ENCODE measurements at regions of chr22 and their contacts with region 1.

Region 1: DNA sequence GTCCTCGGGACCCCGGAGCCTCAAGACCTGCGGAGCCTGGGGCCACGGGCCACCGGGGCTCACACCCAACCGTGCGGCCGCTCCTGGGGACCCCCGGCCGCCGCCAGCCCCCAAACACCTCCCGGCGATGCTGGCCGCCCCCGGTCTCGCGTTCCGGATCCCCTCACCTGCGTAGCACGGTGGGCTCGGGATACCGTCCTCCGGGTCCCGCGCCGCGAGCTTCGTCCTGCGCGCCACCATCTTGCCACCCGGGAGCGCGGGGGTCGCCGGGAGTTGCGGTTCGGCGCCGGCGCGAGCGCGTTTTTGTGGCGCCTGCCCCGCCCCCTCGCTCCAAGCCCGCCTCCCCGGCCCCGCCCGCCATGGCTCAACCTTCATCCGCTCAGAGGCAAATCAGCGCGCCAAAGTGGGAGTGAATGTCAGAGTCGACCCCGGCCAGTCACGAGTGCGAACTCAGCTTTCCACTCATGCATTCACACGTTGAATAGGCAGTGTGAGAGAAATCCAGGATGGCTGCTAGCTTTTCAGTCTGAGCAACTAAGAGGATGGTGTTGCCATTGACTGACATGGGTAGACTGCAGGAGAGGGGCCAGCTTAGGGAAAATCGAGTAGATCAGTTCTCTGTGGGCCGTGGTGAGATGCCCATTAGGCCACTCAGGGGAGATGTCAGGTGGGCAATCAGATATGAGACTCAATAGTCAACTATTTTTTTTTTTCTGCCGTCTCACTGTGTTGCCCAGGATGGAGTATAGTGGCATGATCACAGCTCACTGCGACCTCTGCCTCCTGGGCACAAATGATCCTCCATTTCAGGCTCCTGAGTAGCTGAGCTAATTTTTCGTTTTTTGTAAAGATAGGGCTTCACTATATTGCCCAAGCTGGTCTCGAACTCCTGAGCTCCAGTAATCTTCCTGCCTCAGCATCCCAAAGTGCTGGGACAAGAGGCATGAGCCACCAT is 28.3 kb downstream of the SERHL2 start:
- DNase-seq: peak; percentile 91
- ATAC-seq: peak; percentile 92
- H3K4me3 Mint-ChIP-seq: peak overlapping the region; percentile 95
- H3K27ac Mint-ChIP-seq: peak overlapping the region; percentile 95
- H3K4me1 Mint-ChIP-seq: peaks cover 9% of the 10 kb centered on the region
- H3K27me3 Mint-ChIP-seq: no peaks in the 10 kb centered on the region
- CTCF ChIP-seq: no peak

Region 2: DNA sequence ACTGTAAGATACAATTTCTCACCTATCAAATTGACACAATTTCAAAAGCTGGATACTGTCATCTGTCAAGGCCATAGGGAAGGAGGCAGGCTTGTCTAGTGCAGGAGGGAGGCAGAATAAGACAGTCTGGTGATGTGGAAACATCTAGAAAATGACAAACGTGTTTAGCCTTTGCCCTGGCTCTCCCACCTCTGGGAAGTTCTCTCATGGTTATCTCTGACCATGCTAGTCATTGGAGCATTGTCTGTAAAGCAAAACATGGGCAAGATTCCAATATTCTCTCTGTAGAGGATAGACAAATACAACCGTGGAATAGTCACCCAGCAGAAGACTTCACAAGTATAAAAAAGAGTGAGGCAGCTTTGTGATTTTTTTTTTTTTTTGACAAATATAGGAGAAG is 37.4 kb before region 1 on chr22:
- CTCF ChIA-PET with region 1: no interaction called
- POLR2A ChIA-PET with region 1: no interaction called
- intact Hi-C with region 1: no loop called
- DNase-seq: no peak
- ATAC-seq: no peak
- H3K4me3 Mint-ChIP-seq: no peak overlapping the region
- H3K27ac Mint-ChIP-seq: no peak overlapping the region
- H3K4me1 Mint-ChIP-seq: no peaks in the 10 kb centered on the region
- H3K27me3 Mint-ChIP-seq: no peaks in the 10 kb centered on the region
- CTCF ChIP-seq: no peak

Region 3: GRCh38 chr22:42560781-42561180 is 21.3 kb before region 1 on chr22:
- CTCF ChIA-PET with region 1: interaction called, 10 read pairs
- POLR2A ChIA-PET with region 1: interaction called, 3 read pairs
- intact Hi-C with region 1: no loop called
- DNase-seq: peak; percentile 38
- ATAC-seq: peak; percentile 74
- H3K4me3 Mint-ChIP-seq: no peak overlapping the region
- H3K27ac Mint-ChIP-seq: no peak overlapping the region
- H3K4me1 Mint-ChIP-seq: peaks cover 11% of the 10 kb centered on the region
- H3K27me3 Mint-ChIP-seq: no peaks in the 10 kb centered on the region
- CTCF ChIP-seq: peak; percentile 64

Region 4: GRCh38 chr22:42780070-42780540 is 198.1 kb after region 1 on chr22:
- CTCF ChIA-PET with region 1: no interaction called
- POLR2A ChIA-PET with region 1: no interaction called
- intact Hi-C with region 1: no loop called
- DNase-seq: peak; percentile 69
- ATAC-seq: peak; percentile 68
- H3K4me3 Mint-ChIP-seq: no peak overlapping the region
- H3K27ac Mint-ChIP-seq: no peak overlapping the region
- H3K4me1 Mint-ChIP-seq: no peaks in the 10 kb centered on the region
- H3K27me3 Mint-ChIP-seq: no peaks in the 10 kb centered on the region
- CTCF ChIP-seq: peak; percentile 74